ENCODE measurements at regions of chr14 and their contacts with region 1.

Region 1: DNA sequence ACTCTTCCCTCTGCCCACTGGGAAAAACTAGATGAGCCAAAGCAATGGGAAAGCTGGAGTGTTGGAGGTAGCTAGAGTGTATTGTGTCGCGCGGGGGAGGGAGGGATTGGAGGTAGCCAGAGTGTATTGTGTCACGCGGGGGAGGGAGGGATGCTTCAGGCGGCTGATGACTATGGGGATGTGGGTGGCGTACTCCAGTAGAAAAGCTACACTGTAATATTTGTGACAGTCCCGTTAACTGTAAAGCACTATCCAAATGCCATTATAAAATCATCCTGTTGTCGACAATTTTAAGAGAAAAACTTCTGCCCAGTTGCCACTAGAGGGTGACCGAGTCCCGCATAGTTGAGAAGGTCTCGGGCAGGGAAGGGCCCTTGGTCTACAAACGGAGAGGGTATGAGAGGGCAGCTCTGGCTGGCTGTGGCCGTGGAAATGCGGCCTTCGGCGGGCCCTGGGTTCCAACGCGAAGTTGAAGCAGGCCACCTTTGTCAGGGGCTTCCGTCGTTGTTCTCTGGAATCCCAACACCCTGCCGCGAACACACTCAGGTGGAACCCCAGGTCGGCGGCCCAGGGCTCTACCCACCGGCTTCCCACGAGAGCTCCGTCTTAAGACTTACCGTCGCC is 15.1 kb upstream of the PLEK2 start:
- DNase-seq: peak; percentile 56 to 64
- ATAC-seq: peak; percentile 80 to 90
- H3K4me3 ChIP-seq: no peak overlapping the region
- H3K27ac ChIP-seq: no peak overlapping the region
- H3K4me1 ChIP-seq: peaks cover 4 to 7% of the 10 kb centered on the region in 2 donors
- H3K27me3 ChIP-seq: peaks cover 0 to 8% (median 3%) of the 10 kb centered on the region in 3 donors
- CTCF ChIP-seq: peak; percentile 67 to 84 (median 81)
- POLR2A ChIP-seq: no peak

Region 2: DNA sequence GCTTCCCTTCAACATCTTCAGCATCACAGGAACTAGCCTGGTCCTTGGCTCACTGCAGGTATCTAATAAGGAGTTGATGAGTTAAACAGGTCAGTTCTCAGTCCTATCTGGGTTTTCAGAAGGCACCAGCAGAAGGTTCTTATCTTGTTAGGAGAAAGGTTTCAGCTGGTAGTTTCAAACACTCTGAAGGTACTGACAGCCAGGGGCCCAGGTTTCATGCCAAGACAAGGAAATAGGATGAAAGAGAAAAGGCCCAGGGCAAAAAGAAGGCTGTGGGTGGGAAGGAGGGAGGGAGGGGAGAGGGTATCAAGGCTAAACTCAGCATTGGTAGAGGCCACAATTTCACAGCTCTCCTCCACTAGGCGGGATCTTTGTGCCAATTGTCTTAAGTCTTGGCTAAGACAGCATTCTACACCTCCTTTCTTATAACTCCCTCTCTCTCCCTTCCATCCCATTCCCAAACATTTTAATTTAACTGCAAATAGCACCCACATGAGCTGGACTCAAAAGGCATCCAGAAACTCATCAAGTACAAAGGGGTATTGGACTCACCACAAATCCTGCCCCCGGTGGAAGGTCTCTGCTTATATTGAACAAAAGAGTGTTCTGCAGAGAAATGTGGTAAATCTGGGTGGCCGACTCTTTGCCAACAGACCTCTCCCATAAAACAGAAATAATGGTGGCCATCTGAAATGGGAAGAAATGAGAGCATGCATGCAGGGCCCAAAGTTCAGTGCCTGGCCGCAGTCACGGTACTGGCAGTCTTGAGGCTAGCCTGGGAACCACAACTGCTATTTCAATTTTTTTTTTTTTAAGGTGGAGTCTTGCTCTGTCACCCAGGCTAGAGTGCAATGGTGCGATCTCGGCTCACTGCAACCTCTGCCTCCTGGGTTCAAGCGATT is 40.3 kb after region 1 on chr14:
- in situ Hi-C with region 1: no loop called
- intact Hi-C with region 1: no loop called
- DNase-seq: no peak
- ATAC-seq: no peak
- H3K4me3 ChIP-seq: no peak overlapping the region
- H3K27ac ChIP-seq: no peak overlapping the region
- H3K4me1 ChIP-seq: no peaks in the 10 kb centered on the region
- H3K27me3 ChIP-seq: no peaks in the 10 kb centered on the region
- CTCF ChIP-seq: no peak
- POLR2A ChIP-seq: no peak

Region 3: GRCh38 chr14:67487937-67488893 is 61.1 kb after region 1 on chr14 and contains the start of gene TMEM229B:
- in situ Hi-C with region 1: no loop called
- intact Hi-C with region 1: loop called (anchors 5 kb)
- DNase-seq: no peak
- ATAC-seq: no peak
- H3K4me3 ChIP-seq: peak within 1 kb of the TSS; percentile 2 to 47 (median 25)
- H3K27ac ChIP-seq: peak within 1 kb of the TSS; percentile 42 to 60 (median 54)
- H3K4me1 ChIP-seq: peaks cover 18 to 19% of the 10 kb centered on the region in 2 donors
- H3K27me3 ChIP-seq: no peaks in the 10 kb centered on the region
- CTCF ChIP-seq: no peak
- POLR2A ChIP-seq: no peak
- total RNA-seq, gene TMEM229B: 0.07 to 3.3 (median 0.20) TPM in 3 of 4 donors, not detected in the other

Region 4: DNA sequence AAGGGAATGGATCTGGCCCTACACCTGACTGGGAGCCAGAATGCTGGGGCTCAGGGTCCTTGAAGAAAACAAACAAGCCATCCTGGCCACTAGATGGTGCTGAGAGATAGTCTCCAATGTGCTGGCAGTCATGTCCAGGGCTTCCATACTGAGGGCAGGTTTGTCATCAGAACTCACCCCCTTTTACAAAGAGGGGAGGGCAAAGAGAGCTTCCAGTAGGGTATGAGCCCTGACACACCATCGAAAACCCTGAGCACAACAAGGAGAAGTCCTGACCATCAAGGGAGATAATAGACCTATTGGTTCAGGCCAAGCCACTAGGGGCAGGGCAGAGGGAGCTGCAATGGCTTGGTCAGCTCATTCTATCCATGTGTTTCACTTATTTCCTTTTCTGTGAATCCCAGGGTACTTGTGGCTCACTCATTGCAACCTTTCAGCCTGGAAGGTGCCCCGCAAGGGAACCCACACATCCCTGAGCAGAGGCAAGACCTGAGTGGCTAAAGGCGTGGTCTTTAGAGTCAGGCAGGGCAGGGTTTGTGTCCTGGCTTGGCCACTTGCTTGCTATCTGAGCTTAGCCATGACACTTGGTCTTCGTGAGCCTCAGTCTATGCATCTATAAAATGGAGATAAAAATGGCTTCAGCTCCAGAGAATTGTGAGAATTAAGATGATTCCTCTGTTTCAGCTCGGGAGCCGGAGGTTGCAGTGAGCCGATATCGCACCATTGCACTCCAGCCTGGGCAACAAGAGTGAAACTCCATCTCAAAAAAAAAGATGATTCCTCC is 99.8 kb after region 1 on chr14:
- in situ Hi-C with region 1: no loop called
- intact Hi-C with region 1: loop called (anchors 10 kb)
- DNase-seq: peak in 1 of 2 donors; percentile 33
- ATAC-seq: peak; percentile 79 to 82
- H3K4me3 ChIP-seq: no peak overlapping the region
- H3K27ac ChIP-seq: no peak overlapping the region
- H3K4me1 ChIP-seq: no peaks in the 10 kb centered on the region
- H3K27me3 ChIP-seq: peaks cover 0 to 22% (median 5%) of the 10 kb centered on the region in 3 donors
- CTCF ChIP-seq: peak; percentile 60 to 79 (median 75)
- POLR2A ChIP-seq: no peak

Region 5: DNA sequence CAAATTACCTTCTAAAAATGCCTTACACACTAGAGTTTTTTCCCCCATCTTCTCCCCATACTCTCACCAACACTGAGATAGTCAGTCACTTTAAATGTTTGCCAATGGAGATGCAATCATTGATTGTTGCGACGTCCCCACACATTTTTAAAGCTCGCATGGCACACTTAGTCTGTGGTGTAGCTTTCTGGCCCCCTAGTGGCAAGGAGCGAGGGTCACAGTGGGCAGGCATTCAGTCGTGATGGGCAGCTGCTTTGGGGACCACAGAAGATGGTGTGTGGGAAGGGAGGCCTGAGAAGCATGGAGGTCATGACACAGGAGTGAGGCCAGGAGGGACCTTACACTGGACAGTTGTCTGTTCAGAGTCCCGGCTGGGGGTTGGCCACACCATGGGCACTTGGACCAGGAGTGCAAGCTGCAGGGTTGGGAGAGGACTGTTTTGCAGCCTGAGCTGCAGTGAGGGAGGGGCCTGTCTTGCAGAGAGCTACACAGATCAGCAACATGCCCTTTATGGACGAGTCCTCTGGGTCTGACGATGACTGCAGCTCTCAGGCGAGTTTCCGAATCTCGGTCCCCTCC is 144.3 kb after region 1 on chr14:
- in situ Hi-C with region 1: loop called (anchors 5 to 10 kb)
- intact Hi-C with region 1: loop called (anchors 1 kb)
- DNase-seq: peak; percentile 25 to 41
- ATAC-seq: peak; percentile 59 to 64
- H3K4me3 ChIP-seq: no peak overlapping the region
- H3K27ac ChIP-seq: no peak overlapping the region
- H3K4me1 ChIP-seq: peaks cover 2 to 9% of the 10 kb centered on the region in 2 donors
- H3K27me3 ChIP-seq: no peaks in the 10 kb centered on the region
- CTCF ChIP-seq: peak; percentile 60 to 90 (median 85)
- POLR2A ChIP-seq: no peak

Region 6: DNA sequence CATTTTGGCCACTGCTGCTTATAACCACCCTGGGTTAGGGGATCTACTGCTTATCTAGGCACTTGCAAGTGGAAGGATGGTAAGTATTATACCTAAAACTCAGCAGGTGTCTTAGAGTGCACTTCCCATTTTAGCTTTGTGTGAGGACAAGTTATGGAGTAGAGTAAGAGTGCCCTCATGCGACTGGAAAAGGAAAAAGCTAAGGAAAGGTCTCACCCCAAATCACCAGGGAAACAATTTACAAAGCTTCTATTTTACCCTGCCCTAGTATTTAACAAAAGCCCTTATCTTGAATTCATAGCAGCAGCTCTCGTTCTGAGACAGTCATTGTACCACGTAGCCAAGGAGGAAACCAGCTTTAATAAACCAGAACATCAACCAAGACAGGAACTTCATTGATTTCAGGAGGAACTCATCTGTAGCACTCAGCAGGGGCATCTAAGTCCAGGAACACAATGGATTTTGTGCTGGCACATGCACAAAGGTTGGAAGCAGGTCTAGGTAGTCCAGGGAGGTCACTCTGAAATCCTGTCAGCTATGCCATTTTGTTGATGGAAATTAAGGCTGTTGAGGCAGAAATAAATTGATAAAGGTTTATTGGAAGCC is 277.5 kb after region 1 on chr14:
- in situ Hi-C with region 1: loop called in 3 of 4 experiments (anchors 10 to 25 kb)
- intact Hi-C with region 1: loop called (anchors 5 kb)
- DNase-seq: no peak
- ATAC-seq: peak; percentile 69 to 89
- H3K4me3 ChIP-seq: no peak overlapping the region
- H3K27ac ChIP-seq: no peak overlapping the region
- H3K4me1 ChIP-seq: no peaks in the 10 kb centered on the region
- H3K27me3 ChIP-seq: no peaks in the 10 kb centered on the region
- CTCF ChIP-seq: peak; percentile 61 to 79 (median 68)
- POLR2A ChIP-seq: no peak